MCF 10A (cell line): ENCODE measurements at regions of chr17 and their contacts with region 1.

Region 1: GRCh38 chr17:61574542-61575174 is 16.4 kb downstream of the NACA2 start:
- DNase-seq: peak; percentile 53
- H3K4me3 Mint-ChIP-seq: no peak overlapping the region
- H3K27ac Mint-ChIP-seq: no peak overlapping the region
- H3K4me1 Mint-ChIP-seq: peaks cover 6% of the 10 kb centered on the region
- H3K27me3 Mint-ChIP-seq: no peaks in the 10 kb centered on the region
- CTCF ChIP-seq: peak; percentile 25

Region 2: GRCh38 chr17:61467416-61468259 is 107.0 kb before region 1 on chr17:
- CTCF ChIA-PET with region 1: no interaction called
- POLR2A ChIA-PET with region 1: no interaction called
- intact Hi-C with region 1: no loop called
- DNase-seq: peak; percentile 51
- H3K4me3 Mint-ChIP-seq: no peak overlapping the region
- H3K27ac Mint-ChIP-seq: no peak overlapping the region
- H3K4me1 Mint-ChIP-seq: no peaks in the 10 kb centered on the region
- H3K27me3 Mint-ChIP-seq: no peaks in the 10 kb centered on the region
- CTCF ChIP-seq: no peak

Region 3: GRCh38 chr17:61556224-61557188 is 18.2 kb before region 1 on chr17:
- CTCF ChIA-PET with region 1: interaction called, 10 read pairs
- POLR2A ChIA-PET with region 1: interaction called, 5 read pairs
- intact Hi-C with region 1: loop called (anchors 2 kb)
- DNase-seq: no peak
- H3K4me3 Mint-ChIP-seq: no peak overlapping the region
- H3K27ac Mint-ChIP-seq: no peak overlapping the region
- H3K4me1 Mint-ChIP-seq: no peaks in the 10 kb centered on the region
- H3K27me3 Mint-ChIP-seq: peaks cover 29% of the 10 kb centered on the region
- CTCF ChIP-seq: no peak